ENCODE measurements at regions of chr2 and their contacts with region 1.

Region 1: GRCh38 chr2:176079831-176080539 is 3.8 kb downstream of the EVX2 start:
- DNase-seq: peak; percentile 77 to 84
- H3K4me3 ChIP-seq: peak overlapping the region; percentile 33
- H3K4me3 Mint-ChIP-seq: peak overlapping the region; percentile 85
- H3K27ac Mint-ChIP-seq: no peak overlapping the region
- H3K4me1 ChIP-seq: peaks cover 3% of the 10 kb centered on the region; the same call in 1 of the 2 replicates
- H3K4me1 Mint-ChIP-seq: peaks cover 15% of the 10 kb centered on the region
- H3K27me3 ChIP-seq: peaks cover 12% of the 10 kb centered on the region
- H3K27me3 Mint-ChIP-seq: peaks cover 56% of the 10 kb centered on the region
- CTCF ChIP-seq: peak; percentile 78 to 97

Region 2: DNA sequence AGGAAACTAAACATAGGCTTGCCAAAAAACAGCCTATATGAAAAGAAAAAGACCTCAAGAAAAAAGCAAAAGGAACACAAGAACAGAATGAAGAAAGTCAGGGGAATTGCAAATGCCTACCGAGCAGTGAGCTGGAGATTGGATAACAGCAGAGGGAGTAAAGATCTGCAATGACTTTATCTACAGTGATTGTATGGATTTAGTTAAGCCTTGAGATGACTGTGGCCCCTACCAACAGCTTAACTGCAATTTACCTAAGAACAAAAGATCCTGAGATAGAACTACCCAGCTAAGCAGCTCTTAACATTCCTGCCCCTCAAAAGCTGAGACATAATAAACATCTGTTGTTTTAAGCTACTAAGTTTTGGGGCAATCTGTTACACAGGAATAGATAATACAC is 98.4 kb before region 1 on chr2:
- CTCF ChIA-PET with region 1: no interaction called
- POLR2A ChIA-PET with region 1: no interaction called
- intact Hi-C with region 1: loop called (anchors 1 kb)
- DNase-seq: peak in 1 of 2 experiments; percentile 7
- H3K4me3 ChIP-seq: no peak overlapping the region
- H3K4me3 Mint-ChIP-seq: no peak overlapping the region
- H3K27ac Mint-ChIP-seq: no peak overlapping the region
- H3K4me1 ChIP-seq: peaks cover 9% of the 10 kb centered on the region; the same call in 1 of the 2 replicates
- H3K4me1 Mint-ChIP-seq: peaks cover 7% of the 10 kb centered on the region
- H3K27me3 ChIP-seq: no peaks in the 10 kb centered on the region
- H3K27me3 Mint-ChIP-seq: no peaks in the 10 kb centered on the region
- CTCF ChIP-seq: peak in 1 of 2 experiments; percentile 24

Region 3: GRCh38 chr2:176001916-176002687 is 77.9 kb before region 1 on chr2 and contains the start of gene LNPK:
- CTCF ChIA-PET with region 1: no interaction called
- POLR2A ChIA-PET with region 1: no interaction called
- intact Hi-C with region 1: loop called (anchors 2 kb)
- DNase-seq: peak; percentile 92 to 94
- H3K4me3 ChIP-seq: peak within 1 kb of the TSS; percentile 58
- H3K4me3 Mint-ChIP-seq: peak within 1 kb of the TSS; percentile 79
- H3K27ac Mint-ChIP-seq: peak within 1 kb of the TSS; percentile 66
- H3K4me1 ChIP-seq: 0 out of 2 replicates have a peak, but pooled peaks cover 8% of the 10 kb centered on the region
- H3K4me1 Mint-ChIP-seq: peaks cover 7% of the 10 kb centered on the region
- H3K27me3 ChIP-seq: no peaks in the 10 kb centered on the region
- H3K27me3 Mint-ChIP-seq: peaks cover 10% of the 10 kb centered on the region
- CTCF ChIP-seq: no peak
- total RNA-seq, gene LNPK: 18.1 and 19.1 TPM in 2 replicates

Region 4: DNA sequence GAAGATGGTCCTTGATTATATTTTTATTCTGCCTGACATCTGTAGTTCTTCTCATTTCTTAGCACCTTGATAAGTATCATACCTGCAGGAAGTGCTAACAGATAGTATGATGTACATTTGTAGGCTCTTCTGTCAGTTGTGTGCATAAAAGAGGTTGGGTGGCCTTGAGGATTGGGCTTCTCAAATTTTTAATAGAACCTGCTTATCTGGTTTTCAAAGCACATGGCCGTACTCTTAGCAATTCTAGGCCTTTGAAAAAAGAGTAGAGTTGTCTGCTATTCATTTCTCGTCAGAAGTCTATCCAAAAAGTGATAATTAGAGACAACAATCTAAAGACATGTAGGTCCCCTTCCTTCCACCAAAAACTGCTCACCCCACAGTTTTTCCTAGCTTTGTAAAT is 234.9 kb after region 1 on chr2:
- CTCF ChIA-PET with region 1: no interaction called
- POLR2A ChIA-PET with region 1: no interaction called
- intact Hi-C with region 1: no loop called
- DNase-seq: no peak
- H3K4me3 ChIP-seq: no peak overlapping the region
- H3K4me3 Mint-ChIP-seq: no peak overlapping the region
- H3K27ac Mint-ChIP-seq: no peak overlapping the region
- H3K4me1 ChIP-seq: no peaks in the 10 kb centered on the region
- H3K4me1 Mint-ChIP-seq: no peaks in the 10 kb centered on the region
- H3K27me3 ChIP-seq: no peaks in the 10 kb centered on the region
- H3K27me3 Mint-ChIP-seq: no peaks in the 10 kb centered on the region
- CTCF ChIP-seq: no peak

Measured in Caco-2 (cell line).